Gastrocnemius medialis (tissue), 4 donors: ENCODE measurements at regions of chr15 and their contacts with region 1.

Region 1: GRCh38 chr15:77496710-77497103 is 76.0 kb downstream of the HMG20A start:
- DNase-seq: peak; percentile 65 to 80
- ATAC-seq: peak; percentile 71 to 78
- H3K4me3 ChIP-seq: peak overlapping the region in 3 of 4 donors; percentile 4 to 26 (median 18)
- H3K27ac ChIP-seq: peak overlapping the region; percentile 66 to 82 (median 74)
- H3K4me1 ChIP-seq: peaks cover 38 to 42% of the 10 kb centered on the region in 2 donors
- H3K27me3 ChIP-seq: no peaks in the 10 kb centered on the region
- CTCF ChIP-seq: peak; percentile 80 to 94 (median 91)
- POLR2A ChIP-seq: no peak

Region 2: DNA sequence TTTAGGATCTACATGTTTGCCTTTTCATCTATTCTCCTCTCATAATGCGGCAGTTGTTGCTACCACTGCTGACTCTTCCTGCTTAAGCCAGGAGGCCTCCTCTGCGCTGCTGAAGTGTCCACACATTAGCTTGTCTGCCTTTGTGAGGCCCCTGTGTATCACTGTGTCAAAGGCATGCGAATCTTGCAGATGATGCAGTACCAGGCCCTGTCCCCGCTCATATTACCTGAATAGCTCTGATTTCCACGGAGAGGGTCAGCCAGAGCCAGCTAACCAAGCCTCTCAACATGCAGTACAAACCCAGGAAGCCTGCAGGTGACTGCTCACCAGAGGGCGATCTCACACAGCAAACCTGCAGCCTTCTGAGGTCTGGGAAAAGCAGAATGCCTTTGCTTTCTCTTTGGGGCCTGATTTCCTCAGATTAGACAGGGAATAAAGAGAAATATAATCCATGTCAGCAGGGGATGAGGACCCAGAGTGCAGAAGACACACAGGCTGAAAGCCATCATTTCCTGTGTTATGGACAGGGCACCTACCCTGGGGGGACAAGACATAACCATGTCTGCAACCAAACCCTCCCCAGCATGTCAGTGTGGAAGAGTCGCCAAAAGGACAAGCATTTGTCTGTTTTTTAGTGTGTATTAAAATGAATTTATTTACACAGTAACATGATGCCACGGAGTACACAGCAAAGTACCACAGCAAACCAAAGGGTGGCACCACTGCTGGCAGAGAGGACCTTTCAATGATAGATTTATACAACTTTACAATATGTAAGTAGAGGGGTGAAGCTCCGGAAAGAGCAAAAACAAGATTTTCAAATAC is 389.0 kb before region 1 on chr15:
- in situ Hi-C with region 1: loop called in 1 of 4 experiments (anchors 5 kb)
- intact Hi-C with region 1: loop called (anchors 2 kb)
- DNase-seq: peak; percentile 18 to 70
- ATAC-seq: peak; percentile 70 to 89
- H3K4me3 ChIP-seq: no peak overlapping the region
- H3K27ac ChIP-seq: peak overlapping the region in 2 of 4 donors; percentile 14 to 60
- H3K4me1 ChIP-seq: peaks cover 20 to 34% of the 10 kb centered on the region in 2 donors
- H3K27me3 ChIP-seq: no peaks in the 10 kb centered on the region
- CTCF ChIP-seq: peak; percentile 55 to 77 (median 67)
- POLR2A ChIP-seq: no peak

Region 3: DNA sequence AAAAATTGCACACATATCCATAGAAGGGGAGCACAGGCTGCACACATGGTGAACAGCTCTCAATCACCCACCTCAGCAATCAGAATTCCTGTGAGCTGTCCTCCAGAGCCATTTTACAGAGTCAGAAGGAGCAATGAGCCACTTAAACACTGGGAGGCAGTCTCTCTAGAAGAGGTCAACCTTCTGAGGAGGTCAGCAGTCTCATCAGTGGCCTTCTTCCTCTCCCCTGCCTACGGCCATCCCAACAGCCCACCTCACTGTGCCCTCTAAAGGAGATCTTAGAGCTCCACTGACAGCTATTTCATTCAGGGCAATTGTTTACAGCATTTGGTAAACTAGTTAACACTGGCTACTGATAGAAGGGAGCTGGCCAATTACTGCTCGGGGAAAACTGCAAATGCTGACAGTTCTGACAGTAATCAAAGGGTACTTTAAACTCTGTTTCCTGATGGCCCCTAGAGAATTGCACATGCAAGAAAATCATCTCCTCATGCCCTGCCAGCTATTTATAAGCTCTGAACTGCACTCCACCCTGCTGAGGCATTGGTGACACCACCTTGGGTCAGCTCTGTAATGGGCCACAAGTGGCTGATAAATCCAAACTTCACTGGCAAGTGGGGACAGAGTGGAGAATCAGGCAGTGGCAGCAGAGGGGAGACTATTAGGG is 383.7 kb before region 1 on chr15:
- in situ Hi-C with region 1: loop called in 1 of 4 experiments (anchors 5 kb)
- intact Hi-C with region 1: no loop called
- DNase-seq: no peak
- ATAC-seq: no peak
- H3K4me3 ChIP-seq: no peak overlapping the region
- H3K27ac ChIP-seq: no peak overlapping the region
- H3K4me1 ChIP-seq: peaks cover 1 to 9% of the 10 kb centered on the region in 2 donors
- H3K27me3 ChIP-seq: no peaks in the 10 kb centered on the region
- CTCF ChIP-seq: no peak
- POLR2A ChIP-seq: no peak

Region 4: DNA sequence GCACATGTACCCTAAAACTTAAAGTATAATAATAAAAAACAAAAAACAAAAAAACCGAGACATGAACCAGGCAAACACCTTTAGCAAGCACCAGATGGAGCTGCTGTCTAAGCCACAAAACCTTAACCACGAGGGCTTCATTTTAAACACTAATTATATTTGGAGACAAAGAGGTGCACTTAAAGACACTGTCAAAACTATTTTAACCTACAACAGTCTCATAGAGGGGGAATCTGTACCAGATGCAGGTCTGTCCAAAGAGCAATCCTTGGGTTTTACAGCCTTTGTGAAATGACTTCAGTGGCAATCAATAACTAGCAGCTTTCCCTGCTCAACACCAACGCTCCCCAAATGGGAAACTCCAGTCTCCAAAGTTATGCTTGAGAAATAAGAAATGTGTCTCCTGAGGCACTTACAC is 310.1 kb before region 1 on chr15:
- in situ Hi-C with region 1: no loop called
- intact Hi-C with region 1: loop called (anchors 10 kb)
- DNase-seq: no peak
- ATAC-seq: no peak
- H3K4me3 ChIP-seq: no peak overlapping the region
- H3K27ac ChIP-seq: peak overlapping the region; percentile 3 to 79 (median 72)
- H3K4me1 ChIP-seq: peaks cover 3 to 18% of the 10 kb centered on the region in 2 donors
- H3K27me3 ChIP-seq: no peaks in the 10 kb centered on the region
- CTCF ChIP-seq: peak in 4 of 5 experiments; percentile 41 to 54 (median 48)
- POLR2A ChIP-seq: no peak

Region 5: DNA sequence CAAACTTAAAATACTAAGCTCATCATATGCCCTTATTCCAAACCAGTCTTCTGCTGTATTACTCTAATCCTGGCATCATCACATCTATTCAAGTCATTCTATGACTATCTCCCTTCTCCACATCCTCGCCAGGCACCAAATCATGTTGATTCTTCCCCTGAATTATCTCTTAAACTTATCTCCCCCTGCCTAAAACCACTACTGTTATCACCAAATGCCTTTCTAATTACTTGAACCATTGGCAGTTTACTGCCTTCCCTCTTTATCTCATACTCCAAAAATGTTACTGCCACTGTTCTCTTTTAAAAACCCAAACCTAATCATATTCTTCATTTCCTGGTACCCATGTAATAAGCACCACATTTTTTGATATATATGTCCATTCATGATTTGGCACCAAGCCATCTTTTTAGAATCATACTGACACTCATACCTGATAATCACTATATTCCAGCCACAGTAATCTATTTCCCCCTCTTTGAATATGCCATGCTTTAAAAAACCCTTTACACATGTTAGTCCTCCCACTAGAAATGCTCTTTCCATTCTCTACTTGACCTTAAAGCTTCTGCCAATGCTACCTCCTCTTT is 203.6 kb before region 1 on chr15:
- in situ Hi-C with region 1: no loop called
- intact Hi-C with region 1: loop called (anchors 1 kb)
- DNase-seq: no peak
- ATAC-seq: no peak
- H3K4me3 ChIP-seq: no peak overlapping the region
- H3K27ac ChIP-seq: no peak overlapping the region
- H3K4me1 ChIP-seq: peaks cover 15 to 22% of the 10 kb centered on the region in 2 donors
- H3K27me3 ChIP-seq: no peaks in the 10 kb centered on the region
- CTCF ChIP-seq: no peak
- POLR2A ChIP-seq: no peak

Region 6: GRCh38 chr15:77419836-77420609 is 76.7 kb before region 1 on chr15 and contains the start of gene PEAK1:
- in situ Hi-C with region 1: no loop called
- intact Hi-C with region 1: loop called (anchors 2 kb)
- DNase-seq: peak; percentile 99 to 100
- ATAC-seq: peak; percentile 88 to 91
- H3K4me3 ChIP-seq: peak within 1 kb of the TSS; percentile 77 to 91 (median 84)
- H3K27ac ChIP-seq: peak within 1 kb of the TSS; percentile 87 to 98 (median 97)
- H3K4me1 ChIP-seq: peaks cover 52 to 69% of the 10 kb centered on the region in 2 donors
- H3K27me3 ChIP-seq: no peaks in the 10 kb centered on the region
- CTCF ChIP-seq: peak in 1 of 5 experiments; percentile 5
- POLR2A ChIP-seq: peak; percentile 96
- total RNA-seq, gene PEAK1: 17.8 to 21.9 (median 20.8) TPM

Region 7: DNA sequence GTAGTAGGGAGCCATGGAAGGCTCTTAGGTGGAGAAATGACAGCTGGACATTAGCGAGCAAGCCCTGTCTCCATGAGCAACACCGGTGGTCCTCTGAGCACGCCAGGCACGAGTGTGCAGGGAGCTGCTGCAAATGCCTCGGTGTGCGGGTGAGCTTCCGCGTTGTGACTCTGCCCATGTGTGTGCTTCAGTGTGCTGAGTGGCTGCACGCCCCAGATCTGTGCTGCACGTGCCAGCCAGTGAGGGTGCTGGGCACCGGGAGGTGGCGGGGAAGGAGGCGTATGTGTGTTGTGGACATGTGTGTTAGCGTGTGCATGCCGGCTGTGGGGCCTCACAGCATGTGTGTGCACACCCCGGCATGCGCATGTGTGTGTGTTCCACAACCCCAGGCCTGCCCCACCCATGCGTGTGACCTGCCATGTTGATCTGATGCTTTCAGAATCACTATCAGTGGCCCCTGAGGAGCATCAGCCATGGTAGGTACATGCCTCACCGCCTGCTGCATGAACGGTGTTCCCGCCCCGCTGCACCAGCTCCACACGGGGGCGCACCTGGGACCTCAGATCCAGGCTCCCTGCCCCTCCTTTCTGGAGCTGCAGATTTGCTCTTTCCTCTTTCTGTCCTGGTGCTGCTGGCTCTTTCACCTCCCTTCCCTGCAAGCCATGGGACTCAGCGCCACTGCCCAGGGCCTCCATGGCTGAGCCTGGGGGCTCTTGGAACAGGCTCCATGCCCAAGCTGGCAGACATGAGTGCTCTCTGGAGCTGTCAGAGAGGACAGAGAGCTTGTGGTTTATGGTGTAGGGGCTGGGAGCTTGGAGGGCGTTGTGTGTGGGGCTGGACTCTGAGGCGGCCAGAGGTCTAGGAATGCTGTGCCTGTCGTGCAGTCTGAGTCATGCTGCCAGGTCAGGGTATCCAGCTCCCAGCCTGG is 411.4 kb after region 1 on chr15:
- in situ Hi-C with region 1: no loop called
- intact Hi-C with region 1: no loop called
- DNase-seq: no peak
- ATAC-seq: no peak
- H3K4me3 ChIP-seq: no peak overlapping the region
- H3K27ac ChIP-seq: no peak overlapping the region
- H3K4me1 ChIP-seq: no peaks in the 10 kb centered on the region
- H3K27me3 ChIP-seq: no peaks in the 10 kb centered on the region
- CTCF ChIP-seq: peak in 1 of 5 experiments; percentile 21
- POLR2A ChIP-seq: no peak